IMR-90 (cell line): ENCODE measurements at regions of chr20 and their contacts with region 1.

Region 1: DNA sequence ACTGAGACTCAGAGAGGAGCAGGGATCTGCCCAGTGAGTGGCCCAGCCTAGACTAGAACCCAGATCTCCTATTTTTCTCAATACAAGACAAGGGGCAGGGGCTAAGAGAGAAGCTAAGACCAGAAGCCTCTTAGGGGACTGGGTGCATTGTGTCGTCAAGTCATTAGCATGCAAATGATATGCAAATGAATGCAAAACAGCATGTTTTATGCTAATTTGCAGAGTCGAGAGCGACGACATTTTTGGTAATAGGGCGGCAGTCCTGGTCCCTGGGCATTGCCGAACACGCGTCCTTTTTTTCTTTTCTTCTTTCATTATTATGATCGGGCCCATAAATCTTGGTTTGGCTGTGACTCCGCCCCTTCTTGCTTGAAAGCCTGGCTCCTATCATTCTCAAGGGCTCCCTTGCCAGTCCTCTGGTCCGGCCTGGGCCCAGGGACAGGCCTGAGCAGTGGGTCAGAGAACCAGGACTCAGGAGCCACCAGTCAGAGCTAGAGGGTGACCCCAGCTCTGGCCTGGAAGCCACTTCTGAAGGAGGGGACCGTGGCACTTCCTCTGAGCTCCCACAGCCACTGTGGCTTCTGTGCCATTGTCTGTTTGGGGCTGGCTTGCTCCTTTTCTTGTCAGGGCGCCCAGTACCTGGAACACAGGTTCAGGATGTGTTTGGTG is 32.0 kb upstream of the SCRT2 start:
- DNase-seq: no peak
- ATAC-seq: no peak
- H3K4me3 ChIP-seq: no peak overlapping the region
- H3K27ac ChIP-seq: no peak overlapping the region
- H3K4me1 ChIP-seq: no peaks in the 10 kb centered on the region
- H3K27me3 ChIP-seq: peaks cover 25% of the 10 kb centered on the region
- CTCF ChIP-seq: no peak
- POLR2A ChIP-seq: no peak
- RAD21 ChIP-seq: no peak

Region 2: DNA sequence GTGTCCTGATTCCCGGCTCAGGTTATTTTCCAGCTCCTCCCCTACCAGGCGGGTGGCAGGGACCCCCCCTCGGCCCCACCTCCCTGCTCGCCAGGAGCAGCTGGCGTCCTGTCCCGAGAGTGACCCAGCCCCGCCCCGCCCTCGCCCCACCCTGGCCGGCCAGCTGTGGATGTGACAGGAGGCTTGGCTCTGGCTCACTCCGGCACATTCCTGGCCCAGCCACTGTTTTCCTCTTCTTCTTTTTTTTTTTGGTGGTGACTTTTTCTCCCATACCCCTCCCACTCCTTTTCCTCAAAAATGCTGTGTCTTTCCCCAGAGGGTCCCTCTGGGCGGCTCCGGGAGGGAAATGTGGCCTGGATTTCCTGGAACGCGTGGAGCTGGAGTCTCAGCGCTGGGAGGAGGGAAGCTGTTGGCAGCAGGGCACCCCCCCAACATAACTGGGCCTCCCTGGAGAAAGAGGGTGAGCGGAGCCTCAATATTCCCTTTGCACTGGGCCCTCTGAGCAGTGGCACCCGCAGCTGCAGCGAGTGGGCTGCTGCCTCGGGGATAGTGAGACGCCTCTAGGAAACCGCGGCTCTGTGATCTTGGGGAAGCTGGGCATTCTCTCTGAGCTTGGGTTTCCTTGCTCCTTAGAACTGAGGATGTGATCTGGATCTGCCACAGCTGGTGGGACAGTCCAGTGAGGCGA is 135.7 kb before region 1 on chr20:
- CTCF ChIA-PET with region 1: no interaction called
- POLR2A ChIA-PET with region 1: interaction called, 12 read pairs
- dilution Hi-C with region 1: no loop called
- in situ Hi-C with region 1: no loop called
- intact Hi-C with region 1: no loop called
- DNase-seq: no peak
- ATAC-seq: peak; percentile 40
- H3K4me3 ChIP-seq: no peak overlapping the region
- H3K27ac ChIP-seq: no peak overlapping the region
- H3K4me1 ChIP-seq: no peaks in the 10 kb centered on the region
- H3K27me3 ChIP-seq: peaks cover 53% of the 10 kb centered on the region
- CTCF ChIP-seq: no peak
- POLR2A ChIP-seq: no peak
- RAD21 ChIP-seq: no peak

Region 3: GRCh38 chr20:1034415-1034789 is 326.8 kb after region 1 on chr20:
- CTCF ChIA-PET with region 1: no interaction called
- POLR2A ChIA-PET with region 1: no interaction called
- dilution Hi-C with region 1: no loop called
- in situ Hi-C with region 1: no loop called
- intact Hi-C with region 1: no loop called
- DNase-seq: no peak
- ATAC-seq: no peak
- H3K4me3 ChIP-seq: no peak overlapping the region
- H3K27ac ChIP-seq: no peak overlapping the region
- H3K4me1 ChIP-seq: no peaks in the 10 kb centered on the region
- H3K27me3 ChIP-seq: no peaks in the 10 kb centered on the region
- CTCF ChIP-seq: no peak
- POLR2A ChIP-seq: no peak
- RAD21 ChIP-seq: no peak